ENCODE measurements at regions of chr10 and their contacts with region 1.

Region 1: GRCh38 chr10:89207181-89207800 is at the start of gene CH25H:
- DNase-seq: peak in 2 of 3 donors; percentile 60 to 70
- H3K4me3 ChIP-seq: peak within 1 kb of the TSS; percentile 42 to 82 (median 63)
- H3K27ac ChIP-seq: no peak within 1 kb of the TSS
- H3K4me1 ChIP-seq: peaks cover 0 to 26% (median 23%) of the 10 kb centered on the region in 4 experiments
- H3K27me3 ChIP-seq: peaks cover 8 to 63% (median 25%) of the 10 kb centered on the region in 5 experiments

Region 2: DNA sequence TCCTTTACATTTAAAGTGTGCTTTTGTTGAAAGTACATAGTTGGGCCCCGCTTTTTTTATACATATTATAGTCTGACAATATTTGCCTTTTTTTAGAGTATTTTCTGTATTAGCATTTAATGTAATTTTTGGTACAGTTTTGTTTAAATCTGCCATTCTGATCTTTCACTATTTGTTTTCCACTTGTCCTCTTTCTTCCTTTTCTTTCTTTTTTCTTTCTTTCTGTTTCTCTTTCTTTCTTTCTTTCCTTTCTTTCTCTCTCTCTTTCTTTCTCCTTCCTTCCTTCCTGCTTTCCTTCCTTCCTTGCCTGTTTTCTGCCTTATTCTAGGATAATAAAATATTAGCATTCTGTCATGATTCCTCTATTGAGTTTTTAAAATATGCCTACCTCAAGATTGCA is 491.8 kb before region 1 on chr10:
- CTCF ChIA-PET with region 1: no interaction called
- POLR2A ChIA-PET with region 1: no interaction called
- DNase-seq: no peak
- H3K4me3 ChIP-seq: no peak overlapping the region
- H3K27ac ChIP-seq: no peak overlapping the region
- H3K4me1 ChIP-seq: no peaks in the 10 kb centered on the region
- H3K27me3 ChIP-seq: no peaks in the 10 kb centered on the region

Region 3: GRCh38 chr10:89029785-89030437 is 177.4 kb before region 1 on chr10:
- CTCF ChIA-PET with region 1: interaction called, 38 read pairs
- POLR2A ChIA-PET with region 1: no interaction called
- DNase-seq: peak; percentile 74 to 81 (median 76)
- H3K4me3 ChIP-seq: peak overlapping the region in 1 of 7 experiments; percentile 42
- H3K27ac ChIP-seq: no peak overlapping the region
- H3K4me1 ChIP-seq: peaks cover 9 to 30% (median 19%) of the 10 kb centered on the region in 4 experiments
- H3K27me3 ChIP-seq: no peaks in the 10 kb centered on the region

Region 4: GRCh38 chr10:89183571-89183970 is 23.7 kb before region 1 on chr10:
- CTCF ChIA-PET with region 1: no interaction called
- POLR2A ChIA-PET with region 1: no interaction called
- DNase-seq: no peak
- H3K4me3 ChIP-seq: no peak overlapping the region
- H3K27ac ChIP-seq: no peak overlapping the region
- H3K4me1 ChIP-seq: no peaks in the 10 kb centered on the region
- H3K27me3 ChIP-seq: no peaks in the 10 kb centered on the region

Region 5: GRCh38 chr10:89251409-89252224 is 44.3 kb after region 1 on chr10 and contains the start of gene LIPA:
- CTCF ChIA-PET with region 1: no interaction called
- POLR2A ChIA-PET with region 1: no interaction called
- DNase-seq: peak; percentile 98 to 99 (median 99)
- H3K4me3 ChIP-seq: peak within 1 kb of the TSS; percentile 72 to 96 (median 87)
- H3K27ac ChIP-seq: peak within 1 kb of the TSS in 1 of 2 experiments; percentile 58
- H3K4me1 ChIP-seq: peaks cover 3 to 23% (median 10%) of the 10 kb centered on the region in 4 experiments
- H3K27me3 ChIP-seq: no peaks in the 10 kb centered on the region